ENCODE measurements at regions of chr3 and their contacts with region 1.

Region 1: DNA sequence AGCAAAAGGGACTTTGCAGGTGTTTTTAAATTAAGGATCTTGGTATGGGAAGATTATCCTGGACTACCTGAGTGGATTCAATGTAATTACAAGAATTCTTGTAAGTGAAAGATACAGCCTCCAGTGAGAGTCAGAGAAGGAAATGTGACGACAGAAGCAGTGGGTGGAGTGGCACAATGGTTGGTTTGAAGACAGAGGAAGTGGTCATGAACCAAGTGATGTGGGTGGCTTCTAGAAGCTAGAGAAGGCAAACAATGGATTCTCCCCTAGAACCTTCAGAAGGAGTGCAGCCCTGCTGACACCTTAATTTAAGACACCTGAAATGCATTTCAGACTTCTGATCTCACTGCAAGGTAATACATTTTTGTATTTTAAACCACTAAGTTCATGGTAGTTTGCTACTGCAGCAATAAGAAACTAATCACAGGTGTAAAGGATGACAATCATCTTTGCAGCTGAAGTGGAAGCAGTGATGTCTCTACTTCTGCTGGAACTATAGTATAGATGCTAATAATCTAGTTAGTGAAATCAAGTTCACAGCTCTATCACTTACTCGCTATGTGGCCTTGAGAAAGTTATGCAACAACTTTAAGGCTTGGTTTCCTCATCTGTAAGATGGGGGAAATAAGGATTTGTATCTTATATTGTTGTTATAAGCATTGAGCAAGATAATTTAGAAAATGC is 403.4 kb upstream of the SUCLG2 start:
- DNase-seq: peak; percentile 16 to 94 (median 91)
- ATAC-seq: peak; percentile 99
- H3K4me3 ChIP-seq: peak overlapping the region; percentile 27
- H3K4me3 Mint-ChIP-seq: peak overlapping the region; percentile 33 to 85 (median 68)
- H3K27ac ChIP-seq: peak overlapping the region; percentile 62
- H3K27ac Mint-ChIP-seq: peak overlapping the region; percentile 57 to 93 (median 83)
- H3K4me1 ChIP-seq: peaks cover 11 to 54% of the 10 kb centered on the region in 2 donors
- H3K4me1 Mint-ChIP-seq: peaks cover 30 to 87% (median 82%) of the 10 kb centered on the region in 7 donors
- H3K27me3 ChIP-seq: no peaks in the 10 kb centered on the region
- H3K27me3 Mint-ChIP-seq: no peaks in the 10 kb centered on the region

Region 2: DNA sequence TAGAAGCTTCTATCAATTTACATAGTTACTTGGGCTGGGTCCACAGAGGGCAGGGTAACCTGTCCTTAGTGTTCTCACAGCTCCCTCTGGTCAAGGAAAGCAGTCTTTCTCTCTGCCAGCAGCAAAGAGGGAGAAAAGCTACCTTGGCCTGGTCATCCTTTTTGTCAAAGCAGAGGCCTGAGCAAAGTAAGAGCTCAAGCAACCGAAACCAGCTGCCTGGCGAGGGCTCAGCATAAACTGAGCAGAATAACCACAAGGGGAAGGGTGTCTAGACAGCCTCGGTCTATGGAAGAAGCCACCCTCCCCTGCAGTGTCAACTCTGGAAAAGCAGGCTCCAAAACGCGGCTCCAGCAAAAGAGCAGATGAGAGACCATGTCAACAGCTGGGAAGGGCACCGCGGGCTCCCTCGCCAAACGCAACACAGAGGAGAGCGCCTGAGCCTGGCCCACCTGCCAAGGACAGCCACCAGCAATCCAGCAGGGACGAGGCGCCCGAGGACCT is 1574.3 kb before region 1 on chr3:
- CTCF ChIA-PET with region 1: no interaction called
- POLR2A ChIA-PET with region 1: no interaction called
- intact Hi-C with region 1: loop called in 1 of 2 experiments (anchors 5 kb)
- DNase-seq: peak in 1 of 9 donors; percentile 13
- ATAC-seq: peak; percentile 55
- H3K4me3 ChIP-seq: no peak overlapping the region
- H3K4me3 Mint-ChIP-seq: peak overlapping the region in 8 of 10 donors; percentile 1 to 68 (median 50)
- H3K27ac ChIP-seq: no peak overlapping the region
- H3K27ac Mint-ChIP-seq: peak overlapping the region in 7 of 9 donors; percentile 7 to 70 (median 55)
- H3K4me1 ChIP-seq: peaks cover 42 to 47% of the 10 kb centered on the region in 2 donors
- H3K4me1 Mint-ChIP-seq: peaks cover 53 to 86% (median 77%) of the 10 kb centered on the region in 7 donors
- H3K27me3 ChIP-seq: no peaks in the 10 kb centered on the region
- H3K27me3 Mint-ChIP-seq: no peaks in the 10 kb centered on the region

Region 3: DNA sequence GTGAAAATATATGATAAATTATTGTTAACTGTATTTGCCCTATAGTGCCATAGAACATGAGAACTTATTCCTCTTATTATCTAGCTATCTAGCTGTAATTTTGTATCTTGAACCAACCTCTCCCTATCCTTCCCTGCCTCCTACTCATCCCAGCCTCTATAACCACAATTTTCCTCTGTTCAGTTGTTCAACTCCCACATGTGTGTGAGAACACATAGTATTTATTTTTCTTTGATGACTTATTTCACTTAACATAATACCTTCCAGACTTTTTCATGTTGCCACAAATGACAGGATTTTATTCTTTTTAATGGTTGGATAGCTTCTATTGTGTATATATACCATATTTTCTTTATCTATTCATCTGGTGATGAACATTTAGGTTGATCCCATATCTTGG is 317.9 kb before region 1 on chr3:
- CTCF ChIA-PET with region 1: no interaction called
- POLR2A ChIA-PET with region 1: no interaction called
- intact Hi-C with region 1: loop called in 1 of 2 experiments (anchors 10 kb)
- DNase-seq: no peak
- ATAC-seq: no peak
- H3K4me3 ChIP-seq: no peak overlapping the region
- H3K4me3 Mint-ChIP-seq: peak overlapping the region in 7 of 10 donors; percentile 4 to 72 (median 32)
- H3K27ac ChIP-seq: peak overlapping the region; percentile 62
- H3K27ac Mint-ChIP-seq: peak overlapping the region in 8 of 9 donors; percentile 79 to 98 (median 95)
- H3K4me1 ChIP-seq: peaks cover 6 to 63% of the 10 kb centered on the region in 2 donors
- H3K4me1 Mint-ChIP-seq: peaks cover 15 to 95% (median 90%) of the 10 kb centered on the region in 7 donors
- H3K27me3 ChIP-seq: no peaks in the 10 kb centered on the region
- H3K27me3 Mint-ChIP-seq: no peaks in the 10 kb centered on the region

Region 4: GRCh38 chr3:67940210-67940952 is 117.4 kb before region 1 on chr3:
- CTCF ChIA-PET with region 1: no interaction called
- POLR2A ChIA-PET with region 1: no interaction called
- intact Hi-C with region 1: loop called (anchors 1 to 5 kb)
- DNase-seq: no peak
- ATAC-seq: no peak
- H3K4me3 ChIP-seq: no peak overlapping the region
- H3K4me3 Mint-ChIP-seq: peak overlapping the region in 3 of 10 donors; percentile 49 to 63 (median 60)
- H3K27ac ChIP-seq: no peak overlapping the region
- H3K27ac Mint-ChIP-seq: peak overlapping the region in 8 of 9 donors; percentile 1 to 93 (median 85)
- H3K4me1 ChIP-seq: peaks cover 0 to 17% of the 10 kb centered on the region in 2 donors
- H3K4me1 Mint-ChIP-seq: peaks cover 0 to 29% (median 28%) of the 10 kb centered on the region in 7 donors
- H3K27me3 ChIP-seq: no peaks in the 10 kb centered on the region
- H3K27me3 Mint-ChIP-seq: no peaks in the 10 kb centered on the region

Region 5: GRCh38 chr3:68007621-68008226 is 50.1 kb before region 1 on chr3:
- CTCF ChIA-PET with region 1: interaction called, 4 read pairs
- POLR2A ChIA-PET with region 1: interaction called, 3 read pairs
- intact Hi-C with region 1: loop called in 1 of 2 experiments (anchors 1 kb)
- DNase-seq: peak; percentile 21 to 59 (median 45)
- ATAC-seq: peak; percentile 81
- H3K4me3 ChIP-seq: peak overlapping the region; percentile 62
- H3K4me3 Mint-ChIP-seq: peak overlapping the region; percentile 70 to 98 (median 88)
- H3K27ac ChIP-seq: no peak overlapping the region
- H3K27ac Mint-ChIP-seq: peak overlapping the region in 7 of 9 donors; percentile 45 to 87 (median 73)
- H3K4me1 ChIP-seq: peaks cover 0 to 10% of the 10 kb centered on the region in 2 donors
- H3K4me1 Mint-ChIP-seq: peaks cover 5 to 37% (median 27%) of the 10 kb centered on the region in 7 donors
- H3K27me3 ChIP-seq: no peaks in the 10 kb centered on the region
- H3K27me3 Mint-ChIP-seq: peaks cover 0 to 55% (median 17%) of the 10 kb centered on the region in 5 donors

Region 6: DNA sequence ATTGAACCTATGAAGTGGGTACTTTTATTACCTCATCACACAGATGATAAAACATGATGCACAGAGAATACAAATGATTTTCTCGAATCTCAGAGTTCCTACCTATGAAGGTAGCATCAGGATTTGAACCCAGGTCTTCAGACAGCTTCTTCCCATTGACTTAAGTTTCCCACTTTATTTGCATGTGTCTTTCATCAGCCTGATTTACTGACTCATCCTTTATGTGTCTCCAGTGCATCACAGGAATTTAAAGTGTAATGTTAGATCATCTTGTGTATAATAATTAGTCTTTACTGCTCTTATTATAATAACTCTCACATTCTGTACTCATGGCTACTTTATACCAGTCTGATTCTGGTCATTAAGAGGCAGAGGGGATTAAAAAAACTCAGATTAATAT is 46.0 kb after region 1 on chr3:
- CTCF ChIA-PET with region 1: no interaction called
- POLR2A ChIA-PET with region 1: no interaction called
- intact Hi-C with region 1: no loop called
- DNase-seq: no peak
- ATAC-seq: no peak
- H3K4me3 ChIP-seq: no peak overlapping the region
- H3K4me3 Mint-ChIP-seq: no peak overlapping the region
- H3K27ac ChIP-seq: no peak overlapping the region
- H3K27ac Mint-ChIP-seq: no peak overlapping the region
- H3K4me1 ChIP-seq: peaks cover 0 to 6% of the 10 kb centered on the region in 2 donors
- H3K4me1 Mint-ChIP-seq: peaks cover 5 to 18% (median 11%) of the 10 kb centered on the region in 7 donors
- H3K27me3 ChIP-seq: no peaks in the 10 kb centered on the region
- H3K27me3 Mint-ChIP-seq: no peaks in the 10 kb centered on the region

Region 7: DNA sequence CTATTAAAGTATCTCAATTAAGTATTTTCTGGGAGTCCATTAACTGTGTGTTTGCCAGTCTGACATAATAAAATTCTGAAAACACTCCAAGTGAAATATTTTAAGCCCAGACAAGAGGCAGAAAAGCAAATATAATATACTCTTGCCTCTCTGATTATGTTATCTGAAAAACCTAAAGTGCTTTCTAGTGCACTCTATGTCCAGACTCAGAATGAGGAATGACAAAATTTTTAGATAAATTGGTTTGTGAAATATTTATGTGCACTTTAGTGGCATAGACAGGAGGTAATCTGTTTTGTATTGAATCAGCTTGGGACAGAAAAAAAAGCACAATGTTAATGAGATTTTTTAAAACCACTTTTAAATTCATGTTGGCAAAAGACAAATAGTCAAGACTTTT is 104.9 kb after region 1 on chr3:
- CTCF ChIA-PET with region 1: no interaction called
- POLR2A ChIA-PET with region 1: no interaction called
- intact Hi-C with region 1: no loop called
- DNase-seq: no peak
- ATAC-seq: no peak
- H3K4me3 ChIP-seq: no peak overlapping the region
- H3K4me3 Mint-ChIP-seq: no peak overlapping the region
- H3K27ac ChIP-seq: no peak overlapping the region
- H3K27ac Mint-ChIP-seq: no peak overlapping the region
- H3K4me1 ChIP-seq: no peaks in the 10 kb centered on the region
- H3K4me1 Mint-ChIP-seq: no peaks in the 10 kb centered on the region
- H3K27me3 ChIP-seq: no peaks in the 10 kb centered on the region
- H3K27me3 Mint-ChIP-seq: no peaks in the 10 kb centered on the region

Region 8: DNA sequence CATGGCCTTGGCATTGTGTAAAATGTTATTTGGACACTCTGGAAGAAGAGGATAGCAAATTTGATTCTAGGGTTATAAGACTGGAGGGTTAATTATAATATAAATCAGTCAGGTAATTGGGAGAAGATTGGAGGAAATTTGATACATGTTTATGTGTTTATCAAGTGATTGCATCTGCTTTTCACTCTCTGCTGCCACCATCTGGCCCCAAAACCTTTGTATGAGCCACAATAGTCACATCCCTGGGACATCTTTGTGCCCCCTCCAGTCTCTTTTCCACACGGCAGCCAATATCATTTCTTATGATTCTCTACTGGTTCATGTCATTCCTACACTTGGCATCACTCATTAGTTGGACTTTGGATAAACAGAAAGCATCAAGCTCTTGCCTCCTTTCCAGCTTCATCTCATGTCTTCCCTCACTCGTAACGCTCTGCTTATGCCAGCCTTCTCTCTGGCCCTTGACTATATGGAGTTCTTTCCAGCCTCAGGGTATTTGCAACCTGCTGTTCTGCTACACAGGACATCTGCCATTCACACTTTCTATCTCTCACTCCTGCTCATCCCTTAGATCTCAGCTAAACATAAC is 198.9 kb after region 1 on chr3:
- CTCF ChIA-PET with region 1: no interaction called
- POLR2A ChIA-PET with region 1: no interaction called
- intact Hi-C with region 1: loop called in 1 of 2 experiments (anchors 5 kb)
- DNase-seq: peak in 6 of 9 donors; percentile 13 to 31 (median 22)
- ATAC-seq: no peak
- H3K4me3 ChIP-seq: no peak overlapping the region
- H3K4me3 Mint-ChIP-seq: no peak overlapping the region
- H3K27ac ChIP-seq: no peak overlapping the region
- H3K27ac Mint-ChIP-seq: peak overlapping the region in 1 of 9 donors; percentile 29
- H3K4me1 ChIP-seq: peaks cover 0 to 3% of the 10 kb centered on the region in 2 donors
- H3K4me1 Mint-ChIP-seq: peaks cover 0 to 8% (median 4%) of the 10 kb centered on the region in 7 donors
- H3K27me3 ChIP-seq: no peaks in the 10 kb centered on the region
- H3K27me3 Mint-ChIP-seq: no peaks in the 10 kb centered on the region